Lower leg skin (tissue), 4 donors: ENCODE measurements at regions of chr4 and their contacts with region 1.

Region 1: DNA sequence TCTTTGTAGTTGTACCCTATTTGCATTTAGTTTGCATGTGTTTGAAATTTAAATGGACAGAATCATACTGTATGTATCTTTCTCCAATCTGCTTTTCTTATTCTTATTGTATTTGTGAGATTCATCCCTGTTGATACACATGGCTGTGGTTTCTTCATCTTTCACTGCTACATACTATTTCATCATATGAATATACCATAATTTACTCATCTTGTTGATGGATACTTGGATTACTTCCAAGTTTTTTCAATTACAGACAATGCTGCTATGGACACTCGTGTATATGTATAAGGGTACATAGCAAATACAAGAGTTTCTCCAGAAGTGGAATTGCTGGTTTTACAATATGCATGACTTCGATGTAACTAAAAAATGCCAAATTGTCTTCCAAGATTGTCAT is 11.8 kb upstream of the KLHL8 start:
- DNase-seq: no peak
- H3K4me3 ChIP-seq: no peak overlapping the region
- CTCF ChIP-seq: no peak
- POLR2A ChIP-seq: no peak

Region 2: DNA sequence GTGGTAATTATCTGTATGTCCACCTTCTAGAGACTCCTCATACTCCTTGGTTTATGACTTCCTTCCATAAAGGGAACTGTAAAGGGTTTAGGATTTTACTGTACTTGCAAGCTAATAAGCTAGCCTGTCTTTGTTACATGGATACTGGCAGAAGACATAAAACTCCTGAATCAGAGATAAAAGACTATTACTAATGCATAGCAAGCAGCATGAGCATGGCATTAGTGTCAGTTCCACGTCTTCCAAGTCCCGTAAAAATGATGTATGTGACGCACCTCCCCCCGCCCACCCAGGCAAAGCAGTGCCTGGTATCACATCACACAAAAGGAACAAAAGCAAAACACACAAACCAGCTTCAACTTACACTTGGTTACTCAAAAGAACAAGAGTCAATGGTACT is 454.0 kb before region 1 on chr4:
- intact Hi-C with region 1: no loop called
- DNase-seq: no peak
- H3K4me3 ChIP-seq: no peak overlapping the region
- CTCF ChIP-seq: no peak
- POLR2A ChIP-seq: no peak

Region 3: DNA sequence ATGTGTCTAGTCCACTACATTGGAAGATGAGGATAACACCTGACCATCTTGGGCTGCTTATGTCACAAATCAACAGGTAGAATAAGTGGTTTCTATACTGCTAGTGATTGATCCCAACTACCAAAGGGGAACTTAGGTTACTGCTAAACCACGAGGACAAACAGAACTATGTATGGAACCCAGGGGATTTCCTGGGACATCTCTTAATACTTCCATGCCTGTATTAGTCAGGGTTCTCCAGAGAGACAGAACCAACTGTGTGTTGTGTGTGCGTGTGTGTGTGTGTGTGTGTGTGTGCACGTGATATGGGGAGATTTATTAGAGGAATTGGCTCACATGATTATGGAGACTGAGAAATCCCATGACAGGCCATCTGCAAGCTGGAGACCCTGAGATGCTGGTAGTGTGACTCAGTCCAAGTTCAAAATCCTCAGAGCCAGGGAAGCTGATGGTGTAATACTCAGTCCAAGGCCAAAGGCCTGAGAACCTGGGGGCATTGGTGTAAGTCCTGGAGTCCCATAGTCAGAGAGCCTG is 313.6 kb before region 1 on chr4:
- intact Hi-C with region 1: loop called (anchors 5 kb)
- DNase-seq: peak in 1 of 2 donors; percentile 70
- H3K4me3 ChIP-seq: no peak overlapping the region
- CTCF ChIP-seq: no peak
- POLR2A ChIP-seq: no peak

Region 4: GRCh38 chr4:87150498-87151261 is 81.5 kb before region 1 on chr4:
- intact Hi-C with region 1: loop called (anchors 5 kb)
- DNase-seq: peak in 1 of 2 donors; percentile 71
- H3K4me3 ChIP-seq: no peak overlapping the region
- CTCF ChIP-seq: peak in 1 of 3 donors; percentile 13
- POLR2A ChIP-seq: no peak

Region 5: DNA sequence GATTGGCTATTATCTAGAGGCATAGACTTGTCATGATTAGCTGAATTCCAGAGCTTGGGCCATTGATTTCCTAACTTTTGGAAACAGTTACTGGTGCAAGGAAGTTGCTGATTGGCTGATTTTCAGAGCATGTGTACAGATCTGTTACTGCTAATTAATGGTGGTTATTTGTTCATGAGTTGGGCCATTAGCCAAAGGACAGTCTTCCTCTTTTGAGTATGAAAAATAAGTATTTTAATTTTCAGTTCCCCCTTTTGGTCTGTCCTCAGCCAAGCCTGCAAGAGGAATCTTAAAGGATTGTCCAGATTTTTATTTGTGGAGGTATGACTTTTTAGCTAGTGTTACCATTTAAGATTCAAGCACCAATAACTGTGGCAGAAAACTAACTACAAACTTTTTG is 369.1 kb after region 1 on chr4:
- intact Hi-C with region 1: no loop called
- DNase-seq: no peak
- H3K4me3 ChIP-seq: no peak overlapping the region
- CTCF ChIP-seq: no peak
- POLR2A ChIP-seq: no peak